ENCODE measurements at regions of chr1 and their contacts with region 1.

Region 1: GRCh38 chr1:61851849-61852669 is 109.8 kb downstream of the PATJ start:
- DNase-seq: no peak
- H3K4me3 ChIP-seq: no peak overlapping the region
- H3K27ac ChIP-seq: no peak overlapping the region
- H3K4me1 ChIP-seq: peaks cover 0 to 12% (median 11%) of the 10 kb centered on the region in 4 donors
- H3K27me3 ChIP-seq: no peaks in the 10 kb centered on the region
- CTCF ChIP-seq: peak; percentile 60 to 73 (median 68)
- EP300 ChIP-seq: no peak
- POLR2A ChIP-seq: no peak

Region 2: DNA sequence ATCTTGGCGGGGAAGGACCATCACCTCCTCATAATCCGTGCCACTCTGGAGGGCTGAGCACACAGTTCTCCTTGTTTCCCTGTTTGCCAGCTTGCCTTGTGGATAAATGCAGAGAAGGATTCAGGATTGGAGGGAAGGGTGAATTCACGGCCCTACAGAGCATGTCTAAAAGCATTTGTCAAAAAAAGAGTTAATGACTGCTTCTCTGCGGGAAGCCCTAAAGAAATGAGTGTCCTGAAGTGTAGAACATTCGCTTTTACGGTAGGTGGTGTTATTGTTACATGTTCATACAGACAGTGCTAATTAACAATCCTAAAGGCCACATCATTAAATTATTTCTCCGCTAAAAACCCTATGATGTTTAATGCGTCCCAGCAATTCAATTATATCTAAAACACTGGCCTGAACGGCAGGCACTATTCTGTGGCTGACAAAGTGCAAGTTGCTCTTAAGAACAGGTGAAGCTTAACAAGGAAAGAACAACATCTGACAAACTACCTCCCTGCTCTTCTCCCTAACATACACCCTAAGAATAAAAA is 882.0 kb before region 1 on chr1:
- intact Hi-C with region 1: loop called (anchors 5 kb)
- DNase-seq: no peak
- H3K4me3 ChIP-seq: no peak overlapping the region
- H3K27ac ChIP-seq: peak overlapping the region in 3 of 4 donors; percentile 15 to 48 (median 39)
- H3K4me1 ChIP-seq: peaks cover 0 to 19% (median 14%) of the 10 kb centered on the region in 4 donors
- H3K27me3 ChIP-seq: no peaks in the 10 kb centered on the region
- CTCF ChIP-seq: peak; percentile 52 to 63 (median 60)
- EP300 ChIP-seq: no peak
- POLR2A ChIP-seq: no peak

Region 3: DNA sequence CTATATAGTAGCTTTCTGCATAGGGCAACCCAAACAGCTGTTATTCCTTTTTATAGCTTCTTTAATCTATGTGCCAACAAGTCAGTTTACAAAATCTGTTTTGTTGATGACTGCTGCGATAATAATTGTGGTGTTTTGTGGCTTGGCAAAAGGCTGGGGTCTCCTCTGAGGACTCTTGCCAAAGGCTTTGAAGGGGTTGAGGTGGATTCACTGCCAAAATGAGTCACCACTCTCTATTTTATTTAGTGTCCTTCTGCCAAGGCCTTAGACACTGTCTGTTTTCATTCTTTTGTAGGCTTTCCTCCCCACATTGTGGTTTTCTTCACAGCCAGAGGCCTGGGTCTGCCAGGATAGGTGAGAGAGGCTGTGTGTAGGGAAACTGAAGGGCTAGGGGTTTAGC is 607.9 kb before region 1 on chr1:
- intact Hi-C with region 1: no loop called
- DNase-seq: no peak
- H3K4me3 ChIP-seq: no peak overlapping the region
- H3K27ac ChIP-seq: peak overlapping the region; percentile 77 to 84 (median 78)
- H3K4me1 ChIP-seq: peaks cover 34 to 75% (median 70%) of the 10 kb centered on the region in 4 donors
- H3K27me3 ChIP-seq: no peaks in the 10 kb centered on the region
- CTCF ChIP-seq: no peak
- EP300 ChIP-seq: no peak
- POLR2A ChIP-seq: no peak

Region 4: GRCh38 chr1:62643283-62643682 is 791.2 kb after region 1 on chr1:
- intact Hi-C with region 1: no loop called
- DNase-seq: no peak
- H3K4me3 ChIP-seq: no peak overlapping the region
- H3K27ac ChIP-seq: no peak overlapping the region
- H3K4me1 ChIP-seq: no peaks in the 10 kb centered on the region
- H3K27me3 ChIP-seq: no peaks in the 10 kb centered on the region
- CTCF ChIP-seq: no peak
- EP300 ChIP-seq: no peak
- POLR2A ChIP-seq: no peak